ENCODE measurements at regions of chr4 and their contacts with region 1.

Region 1: GRCh38 chr4:82900331-82901128 is at the start of gene THAP9:
- DNase-seq: peak; percentile 96
- ATAC-seq: peak; percentile 92
- H3K4me3 ChIP-seq: peak within 1 kb of the TSS; percentile 86
- H3K27ac ChIP-seq: peak within 1 kb of the TSS; percentile 95
- H3K4me1 ChIP-seq: peaks cover 7% of the 10 kb centered on the region
- H3K27me3 ChIP-seq: no peaks in the 10 kb centered on the region
- CTCF ChIP-seq: no peak
- EP300 ChIP-seq: no peak; a peak in 1 of 4 replicates
- POLR2A ChIP-seq: peak; percentile 93
- RAD21 ChIP-seq: no peak
- polyA plus RNA-seq, gene THAP9: 2.4 to 2.5 TPM

Region 2: GRCh38 chr4:82851885-82852750 is 48.4 kb before region 1 on chr4:
- CTCF ChIA-PET with region 1: interaction called, 44 read pairs
- POLR2A ChIA-PET with region 1: interaction called, 4 read pairs
- RAD21 ChIA-PET with region 1: interaction called, 5 read pairs
- SMC1A ChIA-PET with region 1: interaction called, 6 read pairs
- in situ Hi-C with region 1: no loop called
- intact Hi-C with region 1: no loop called
- DNase-seq: no peak
- ATAC-seq: peak; percentile 77
- H3K4me3 ChIP-seq: no peak overlapping the region
- H3K27ac ChIP-seq: no peak overlapping the region
- H3K4me1 ChIP-seq: no peaks in the 10 kb centered on the region
- H3K27me3 ChIP-seq: no peaks in the 10 kb centered on the region
- CTCF ChIP-seq: peak; percentile 42 to 50 (median 45); a peak in 3 of 6 replicates
- EP300 ChIP-seq: no peak
- POLR2A ChIP-seq: no peak
- RAD21 ChIP-seq: peak; percentile 63

Region 3: DNA sequence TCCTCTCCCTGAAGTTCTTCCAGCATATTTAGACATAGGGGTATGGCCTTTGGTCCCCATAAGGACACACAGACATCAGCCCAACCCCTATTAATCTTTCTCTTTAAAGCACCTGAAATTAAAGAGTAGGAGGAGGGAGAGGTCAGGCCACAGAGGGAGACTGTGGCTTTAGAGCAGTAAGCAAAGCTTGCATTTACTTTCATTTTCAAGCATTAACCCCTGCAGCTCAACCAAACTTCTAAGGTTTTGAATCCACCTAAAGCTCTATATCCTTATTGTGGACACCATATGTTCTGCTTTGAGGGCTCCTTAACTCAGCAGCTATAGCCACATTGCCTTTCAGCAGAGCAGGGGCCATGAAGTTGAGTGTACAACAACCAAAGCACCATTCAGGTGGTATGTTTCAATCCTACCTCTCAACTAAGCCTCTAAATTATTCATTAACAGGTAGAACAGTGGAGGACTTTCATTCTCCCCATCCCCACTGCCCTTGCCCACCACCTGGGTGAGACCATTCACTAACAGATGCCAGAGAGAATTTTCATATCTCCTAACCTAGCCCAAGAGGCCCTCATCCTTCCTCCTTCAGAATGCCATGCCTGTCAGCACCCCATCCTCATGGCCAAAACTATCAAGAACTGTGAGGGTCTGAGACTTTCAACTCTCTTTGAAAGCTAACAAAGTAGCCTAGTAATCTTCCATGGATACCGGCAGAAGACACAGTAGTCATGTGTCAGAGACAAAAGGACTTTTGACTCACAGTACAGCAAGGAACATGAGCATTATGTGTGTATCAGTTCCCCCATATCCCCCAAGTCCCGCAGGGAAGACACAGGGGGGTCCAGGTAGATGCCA is 89.3 kb after region 1 on chr4:
- CTCF ChIA-PET with region 1: interaction called, 4 read pairs
- POLR2A ChIA-PET with region 1: no interaction called
- RAD21 ChIA-PET with region 1: interaction called, 3 read pairs
- SMC1A ChIA-PET with region 1: interaction called, 11 read pairs
- in situ Hi-C with region 1: no loop called
- intact Hi-C with region 1: no loop called
- DNase-seq: peak; percentile 41
- ATAC-seq: peak; percentile 96
- H3K4me3 ChIP-seq: peak overlapping the region; percentile 34; the same call in 1 of the 2 replicates
- H3K27ac ChIP-seq: peak overlapping the region; percentile 35
- H3K4me1 ChIP-seq: peaks cover 5% of the 10 kb centered on the region; the same call in 1 of the 2 replicates
- H3K27me3 ChIP-seq: no peaks in the 10 kb centered on the region
- CTCF ChIP-seq: no peak
- EP300 ChIP-seq: 0 out of 4 replicates have a peak, but pooled peaks of 1 of the 2 experiments have one; percentile 17
- POLR2A ChIP-seq: no peak
- RAD21 ChIP-seq: 0 out of 2 replicates have a peak, but pooled peaks have one; percentile 1

Region 4: DNA sequence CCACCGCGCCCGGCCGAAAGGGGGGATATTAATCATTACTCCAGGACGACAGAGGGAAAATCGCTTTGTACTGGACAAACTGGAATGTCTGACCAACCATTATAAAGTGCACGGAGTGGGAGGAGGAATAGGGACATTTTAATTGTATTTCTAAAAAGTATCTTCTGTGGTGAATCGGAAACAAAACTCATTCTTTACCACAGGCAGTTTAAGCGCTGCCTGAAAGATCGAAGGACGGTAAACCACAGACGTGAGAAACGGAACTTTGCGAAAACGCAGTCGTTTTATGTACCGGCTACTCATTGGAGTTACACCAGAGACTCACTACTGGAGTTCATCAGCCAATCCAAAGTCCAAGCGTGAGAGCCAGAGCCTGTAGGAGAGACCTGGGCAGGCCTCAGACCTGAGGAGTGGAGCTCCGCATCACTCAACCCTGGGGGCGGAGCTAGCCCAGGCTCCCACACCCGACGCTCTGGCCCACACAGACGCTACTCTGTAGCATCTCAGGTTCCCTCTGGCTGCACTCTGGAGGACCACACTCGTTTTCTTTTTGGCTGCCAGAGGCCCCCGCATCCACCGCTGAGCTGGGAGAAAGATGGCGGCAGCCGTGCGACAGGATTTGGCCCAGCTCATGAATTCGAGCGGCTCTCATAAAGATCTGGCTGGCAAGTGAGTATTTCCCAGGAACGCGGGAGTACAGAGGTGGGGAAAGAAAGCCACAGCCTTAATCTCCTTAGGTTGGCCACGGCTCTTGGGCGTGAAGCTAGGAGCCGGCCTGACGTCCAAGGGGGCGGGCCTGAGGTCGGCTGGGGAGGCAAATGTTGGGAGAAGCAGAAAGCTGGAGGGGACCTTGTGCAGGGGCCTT is 134.3 kb after region 1 on chr4 and contains the start of gene COPS4:
- CTCF ChIA-PET with region 1: interaction called, 9 read pairs
- POLR2A ChIA-PET with region 1: interaction called, 17 read pairs
- RAD21 ChIA-PET with region 1: interaction called, 17 read pairs
- SMC1A ChIA-PET with region 1: interaction called, 5 read pairs
- in situ Hi-C with region 1: no loop called
- intact Hi-C with region 1: loop called (anchors 2 kb)
- DNase-seq: peak; percentile 100
- ATAC-seq: peak; percentile 96
- H3K4me3 ChIP-seq: peak within 1 kb of the TSS; percentile 78
- H3K27ac ChIP-seq: peak within 1 kb of the TSS; percentile 77
- H3K4me1 ChIP-seq: peaks cover 6% of the 10 kb centered on the region
- H3K27me3 ChIP-seq: no peaks in the 10 kb centered on the region
- CTCF ChIP-seq: peak in 1 of 3 experiments; percentile 17; a peak in 1 of 6 replicates
- EP300 ChIP-seq: peak; percentile 42 to 66; a peak in 3 of 4 replicates
- POLR2A ChIP-seq: peak; percentile 74
- RAD21 ChIP-seq: 0 out of 2 replicates have a peak, but pooled peaks have one; percentile 15
- polyA plus RNA-seq, gene COPS4: 112 to 159 TPM